GM13977 (cell line): ENCODE measurements at regions of chr12 and their contacts with region 1.

Region 1: GRCh38 chr12:9731797-9732196 is 1.1 kb downstream of the CLECL1 start:
- DNase-seq: no peak
- CTCF ChIP-seq: no peak

Region 2: DNA sequence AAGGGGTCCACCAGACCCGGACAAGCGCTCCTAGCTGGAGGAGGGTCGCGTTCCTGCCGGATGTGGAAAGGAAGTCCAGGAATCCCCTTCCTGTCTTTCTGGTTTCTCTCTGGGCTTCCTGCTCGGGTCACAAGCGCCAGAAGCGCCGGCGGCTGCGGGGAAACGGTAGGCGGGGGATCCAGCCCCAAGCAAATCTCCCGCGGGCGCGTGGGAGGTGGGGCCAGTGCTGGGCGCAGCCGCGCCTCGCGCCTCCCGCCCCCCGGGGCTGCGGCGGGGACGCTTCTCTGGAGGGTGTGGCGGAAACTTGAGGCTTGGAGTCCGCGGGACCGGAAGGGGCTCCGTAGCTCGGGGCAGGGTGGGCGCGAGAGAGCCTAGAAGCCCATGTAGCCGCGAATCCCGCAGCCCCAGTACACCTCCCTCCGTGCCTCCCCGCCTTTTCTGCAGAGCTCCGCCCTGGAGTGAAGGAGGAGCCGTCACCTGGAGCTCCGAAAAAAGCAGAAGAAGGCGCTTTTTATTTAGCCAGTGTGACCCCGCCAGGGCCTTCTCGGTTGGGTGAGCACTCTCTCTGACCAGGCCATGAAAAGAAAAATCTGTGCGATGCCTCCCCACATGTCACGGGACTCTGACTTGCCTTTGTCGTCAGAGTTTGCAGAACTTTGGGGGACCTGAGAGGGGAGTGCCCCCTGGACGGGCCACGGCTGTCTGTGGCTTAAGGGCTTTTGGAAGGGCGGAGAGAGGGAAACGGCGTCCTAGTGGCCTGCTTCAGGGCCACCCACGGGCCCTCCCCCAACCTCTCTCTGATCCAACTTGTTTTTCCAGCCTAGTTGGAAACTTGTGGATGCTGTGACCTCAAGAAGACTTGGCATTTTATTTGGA is 83.7 kb before region 1 on chr12:
- in situ Hi-C with region 1: loop called (anchors 10 kb)
- DNase-seq: peak; percentile 88
- CTCF ChIP-seq: no peak